GM12878 (cell line): ENCODE measurements at regions of chr2 and their contacts with region 1.

Region 1: DNA sequence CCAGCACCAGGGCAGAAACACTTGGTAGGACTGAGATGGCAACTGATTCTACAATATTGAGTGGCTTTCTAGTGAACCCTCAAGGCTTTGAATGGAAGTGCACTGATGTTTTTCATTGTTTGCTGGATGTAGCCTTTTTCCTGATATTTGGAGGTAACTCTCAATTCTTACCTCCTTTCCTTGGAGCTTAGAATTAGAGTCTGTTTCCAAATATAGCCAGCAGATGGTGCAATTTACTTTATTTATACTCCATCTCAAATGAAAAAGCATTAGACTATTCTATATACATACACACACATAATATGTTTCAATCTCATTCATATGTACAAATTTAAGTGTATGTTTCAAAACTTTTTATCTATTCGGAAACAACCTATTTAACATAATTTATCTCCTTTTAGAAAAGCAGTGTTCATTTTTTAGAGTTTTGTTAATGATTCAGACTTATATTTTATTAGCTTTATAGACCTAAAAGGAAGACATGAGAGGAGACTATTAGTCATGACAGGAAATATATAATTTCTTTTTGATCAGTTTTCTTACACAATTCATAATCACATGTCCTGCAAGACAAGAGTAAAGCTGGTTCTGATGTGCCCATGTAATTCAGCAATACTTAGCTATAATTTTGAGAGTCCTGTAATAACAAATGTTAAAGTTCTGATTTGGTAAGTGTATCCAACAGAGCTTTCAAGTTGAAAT is 124.8 kb downstream of the NUP35 start:
- DNase-seq: no peak
- ATAC-seq: peak; percentile 73
- H3K4me3 ChIP-seq: no peak overlapping the region
- H3K27ac ChIP-seq: no peak overlapping the region
- H3K4me1 ChIP-seq: no peaks in the 10 kb centered on the region
- H3K27me3 ChIP-seq: no peaks in the 10 kb centered on the region
- CTCF ChIP-seq: peak; percentile 33 to 56 (median 37); a peak in 4 of 6 replicates
- EP300 ChIP-seq: no peak
- POLR2A ChIP-seq: no peak
- RAD21 ChIP-seq: peak; percentile 62

Region 2: DNA sequence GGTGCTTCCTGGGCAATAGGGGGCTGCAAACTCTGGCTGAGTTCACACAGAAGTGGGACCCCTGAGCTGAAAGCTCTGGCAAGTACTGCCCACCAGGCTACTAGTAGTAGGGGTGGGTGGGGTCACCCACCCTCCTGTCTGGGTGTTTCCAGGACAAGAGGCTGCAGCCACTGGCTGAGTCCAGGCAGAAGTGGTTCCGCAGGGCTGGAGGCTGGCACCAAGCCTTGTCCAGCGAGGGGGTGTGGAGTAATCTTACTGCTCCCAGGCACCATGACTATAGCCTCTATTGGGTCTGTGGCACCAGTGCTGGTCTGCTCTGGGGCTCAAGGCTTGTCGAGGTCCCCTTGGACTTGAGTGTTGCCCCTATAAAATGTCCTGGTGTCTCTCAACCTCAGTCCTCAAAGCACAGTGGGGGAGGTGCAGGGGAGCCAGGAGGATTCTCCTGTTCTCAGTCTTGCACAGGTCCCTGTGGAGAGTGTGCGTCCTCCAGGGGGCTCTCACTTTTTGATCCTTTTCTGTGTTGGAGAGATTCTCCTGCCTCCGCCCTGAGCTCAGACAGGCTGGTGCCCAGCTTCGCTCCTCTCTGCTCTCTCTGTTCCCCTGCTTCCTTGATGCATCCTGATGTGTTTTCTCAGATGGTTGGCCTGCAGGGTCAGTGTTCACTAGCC is 76.7 kb before region 1 on chr2:
- CTCF ChIA-PET with region 1: no interaction called
- POLR2A ChIA-PET with region 1: no interaction called
- RAD21 ChIA-PET with region 1: no interaction called
- SMC1A ChIA-PET with region 1: no interaction called
- in situ Hi-C with region 1: no loop called
- intact Hi-C with region 1: no loop called
- DNase-seq: no peak
- ATAC-seq: no peak
- H3K4me3 ChIP-seq: no peak overlapping the region
- H3K27ac ChIP-seq: no peak overlapping the region
- H3K4me1 ChIP-seq: no peaks in the 10 kb centered on the region
- H3K27me3 ChIP-seq: no peaks in the 10 kb centered on the region
- CTCF ChIP-seq: no peak
- EP300 ChIP-seq: no peak
- POLR2A ChIP-seq: no peak
- RAD21 ChIP-seq: no peak

Region 3: GRCh38 chr2:183214680-183215079 is 34.3 kb before region 1 on chr2:
- CTCF ChIA-PET with region 1: interaction called, 10 read pairs
- POLR2A ChIA-PET with region 1: no interaction called
- RAD21 ChIA-PET with region 1: interaction called, 11 read pairs
- SMC1A ChIA-PET with region 1: interaction called, 4 read pairs
- in situ Hi-C with region 1: no loop called
- intact Hi-C with region 1: no loop called
- DNase-seq: no peak
- ATAC-seq: peak; percentile 85
- H3K4me3 ChIP-seq: no peak overlapping the region
- H3K27ac ChIP-seq: no peak overlapping the region; the same call in 1 of the 2 replicates
- H3K4me1 ChIP-seq: peaks cover 14% of the 10 kb centered on the region
- H3K27me3 ChIP-seq: no peaks in the 10 kb centered on the region
- CTCF ChIP-seq: no peak
- EP300 ChIP-seq: peak; percentile 12 to 60; a peak in 2 of 4 replicates
- POLR2A ChIP-seq: no peak
- RAD21 ChIP-seq: no peak

Region 4: GRCh38 chr2:183543731-183544130 is 294.7 kb after region 1 on chr2:
- CTCF ChIA-PET with region 1: no interaction called
- POLR2A ChIA-PET with region 1: no interaction called
- RAD21 ChIA-PET with region 1: no interaction called
- SMC1A ChIA-PET with region 1: no interaction called
- in situ Hi-C with region 1: no loop called
- intact Hi-C with region 1: no loop called
- DNase-seq: peak; percentile 24
- ATAC-seq: peak; percentile 99
- H3K4me3 ChIP-seq: no peak overlapping the region
- H3K27ac ChIP-seq: no peak overlapping the region
- H3K4me1 ChIP-seq: peaks cover 6% of the 10 kb centered on the region
- H3K27me3 ChIP-seq: no peaks in the 10 kb centered on the region; a peak in 1 of 4 replicates
- CTCF ChIP-seq: no peak
- EP300 ChIP-seq: no peak
- POLR2A ChIP-seq: no peak
- RAD21 ChIP-seq: no peak